ENCODE measurements at regions of chr14 and their contacts with region 1.

Region 1: DNA sequence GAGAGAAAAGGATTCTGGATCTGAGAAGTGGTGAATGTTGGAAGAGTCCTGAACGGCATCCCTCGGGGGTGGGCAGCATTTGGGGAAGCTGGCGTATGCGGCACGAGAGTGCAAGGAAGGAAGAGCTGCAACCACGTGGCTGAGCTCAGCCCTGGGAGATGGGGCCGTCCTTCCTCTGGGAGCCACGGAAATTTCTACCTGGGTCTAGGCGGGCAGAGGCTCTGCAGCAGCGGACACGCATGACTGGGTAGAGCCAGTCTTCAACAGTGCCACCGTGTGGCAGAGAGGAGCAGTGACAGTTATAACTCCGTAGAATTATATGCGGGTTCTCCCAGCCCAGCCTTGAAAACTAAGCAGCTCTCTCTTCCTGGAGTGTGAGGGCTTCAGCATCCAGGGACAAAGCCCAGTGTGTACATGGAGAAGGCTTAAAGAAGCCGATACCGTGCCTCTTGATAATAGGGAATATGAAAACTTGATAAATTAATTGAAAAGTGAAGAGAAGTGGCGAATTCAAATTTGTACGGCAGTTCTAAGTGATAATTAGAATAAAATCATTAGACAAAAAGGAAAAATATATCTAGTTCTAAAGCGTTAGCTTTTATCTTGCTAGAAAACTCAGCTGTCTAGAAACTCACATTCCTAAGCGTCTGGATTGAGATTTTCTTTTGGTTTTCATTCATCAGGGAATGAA is 82.9 kb upstream of the STXBP6 start:
- DNase-seq: peak; percentile 73
- H3K4me3 ChIP-seq: no peak overlapping the region
- H3K27ac ChIP-seq: no peak overlapping the region
- H3K4me1 ChIP-seq: no peaks in the 10 kb centered on the region
- H3K27me3 ChIP-seq: no peaks in the 10 kb centered on the region
- CTCF ChIP-seq: peak; percentile 80 to 92 (median 86)
- POLR2A ChIP-seq: no peak

Region 2: GRCh38 chr14:24734878-24735500 is 397.9 kb before region 1 on chr14:
- intact Hi-C with region 1: loop called (anchors 5 kb)
- DNase-seq: peak; percentile 71
- H3K4me3 ChIP-seq: no peak overlapping the region
- H3K27ac ChIP-seq: no peak overlapping the region
- H3K4me1 ChIP-seq: no peaks in the 10 kb centered on the region
- H3K27me3 ChIP-seq: no peaks in the 10 kb centered on the region
- CTCF ChIP-seq: peak; percentile 59 to 84 (median 78)
- POLR2A ChIP-seq: no peak

Region 3: DNA sequence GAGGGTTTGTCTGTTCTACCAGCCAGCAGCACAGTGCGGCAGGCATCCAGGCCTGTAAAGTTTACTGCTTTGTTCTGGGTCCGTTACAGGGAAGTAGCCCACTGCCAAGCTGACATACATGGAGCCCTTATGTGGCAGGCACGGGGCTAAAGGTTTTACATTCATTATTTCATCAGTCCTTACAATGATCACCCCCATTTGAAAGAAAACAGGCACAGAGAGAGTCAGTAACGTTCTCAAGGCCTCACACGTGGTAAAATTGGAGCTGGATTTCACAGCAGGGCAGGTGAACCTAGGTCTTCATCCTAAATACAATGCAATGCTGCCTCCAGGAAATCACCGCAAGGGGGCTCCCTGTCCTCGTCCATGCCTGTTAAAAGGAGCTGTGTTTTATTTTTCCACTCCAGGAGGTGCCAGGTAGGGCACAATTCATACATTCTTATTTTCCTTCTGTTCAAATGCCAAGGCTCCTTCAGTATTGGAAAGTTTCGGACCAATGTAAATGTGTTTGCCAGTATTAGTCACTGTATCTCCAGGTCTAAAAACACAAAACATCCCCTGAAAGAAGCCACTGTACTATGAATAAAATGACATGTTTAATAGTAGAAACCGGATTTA is 326.7 kb before region 1 on chr14:
- intact Hi-C with region 1: loop called (anchors 5 kb)
- DNase-seq: peak; percentile 86
- H3K4me3 ChIP-seq: no peak overlapping the region
- H3K27ac ChIP-seq: peak overlapping the region; percentile 29 to 30
- H3K4me1 ChIP-seq: peaks cover 2% of the 10 kb centered on the region
- H3K27me3 ChIP-seq: no peaks in the 10 kb centered on the region
- CTCF ChIP-seq: peak; percentile 72 to 88 (median 82)
- POLR2A ChIP-seq: no peak

Region 4: DNA sequence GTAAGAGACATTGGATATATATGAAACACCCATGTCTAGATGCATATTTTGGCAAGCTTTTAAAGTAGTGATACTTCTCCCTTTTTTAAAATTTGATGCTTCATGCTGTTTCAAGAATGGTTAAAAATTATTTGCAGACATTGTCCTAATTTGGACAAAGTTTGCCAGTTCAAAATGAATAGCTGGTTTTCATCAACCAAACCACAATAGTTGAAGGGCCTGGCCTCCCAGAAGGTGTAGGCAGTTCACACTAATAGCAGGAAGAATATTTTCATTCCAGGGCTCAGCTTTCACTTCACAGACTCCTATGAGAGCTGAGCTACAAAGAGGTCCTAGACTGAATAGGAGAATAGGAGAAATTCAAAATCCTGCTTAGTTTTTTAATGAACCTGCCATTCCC is 161.6 kb before region 1 on chr14:
- intact Hi-C with region 1: no loop called
- DNase-seq: no peak
- H3K4me3 ChIP-seq: no peak overlapping the region
- H3K27ac ChIP-seq: no peak overlapping the region
- H3K4me1 ChIP-seq: no peaks in the 10 kb centered on the region
- H3K27me3 ChIP-seq: no peaks in the 10 kb centered on the region
- CTCF ChIP-seq: no peak
- POLR2A ChIP-seq: no peak

Region 5: GRCh38 chr14:25049568-25050268 is 83.2 kb before region 1 on chr14 and contains the start of gene STXBP6:
- intact Hi-C with region 1: loop called (anchors 5 kb)
- DNase-seq: peak; percentile 77
- H3K4me3 ChIP-seq: peak within 1 kb of the TSS; percentile 68 to 83
- H3K27ac ChIP-seq: peak within 1 kb of the TSS; percentile 60 to 74
- H3K4me1 ChIP-seq: peaks cover 20% of the 10 kb centered on the region
- H3K27me3 ChIP-seq: no peaks in the 10 kb centered on the region
- CTCF ChIP-seq: peak in 1 of 4 experiments; percentile 25
- POLR2A ChIP-seq: peak; percentile 45
- total RNA-seq, gene STXBP6: 12.4 to 32.3 TPM

Region 6: GRCh38 chr14:25861406-25861805 is 728.5 kb after region 1 on chr14:
- intact Hi-C with region 1: no loop called
- DNase-seq: no peak
- H3K4me3 ChIP-seq: no peak overlapping the region
- H3K27ac ChIP-seq: no peak overlapping the region
- H3K4me1 ChIP-seq: no peaks in the 10 kb centered on the region
- H3K27me3 ChIP-seq: no peaks in the 10 kb centered on the region
- CTCF ChIP-seq: no peak
- POLR2A ChIP-seq: no peak